Prostate gland (tissue), 2 donors: ENCODE measurements at regions of chr13 and their contacts with region 1.

Region 1: GRCh38 chr13:51286135-51287002 is 53.1 kb upstream of the SERPINE3 start:
- DNase-seq: peak; percentile 84
- H3K4me3 ChIP-seq: no peak overlapping the region
- H3K27ac ChIP-seq: no peak overlapping the region
- H3K4me1 ChIP-seq: no peaks in the 10 kb centered on the region
- H3K27me3 ChIP-seq: no peaks in the 10 kb centered on the region
- CTCF ChIP-seq: peak; percentile 83 to 99 (median 90)
- POLR2A ChIP-seq: no peak

Region 2: GRCh38 chr13:50598338-50598737 is 688.0 kb before region 1 on chr13:
- intact Hi-C with region 1: no loop called
- DNase-seq: no peak
- H3K4me3 ChIP-seq: no peak overlapping the region
- H3K27ac ChIP-seq: no peak overlapping the region
- H3K4me1 ChIP-seq: no peaks in the 10 kb centered on the region
- H3K27me3 ChIP-seq: peaks cover 2% of the 10 kb centered on the region
- CTCF ChIP-seq: no peak
- POLR2A ChIP-seq: no peak

Region 3: GRCh38 chr13:51222037-51222685 is 64.2 kb before region 1 on chr13 and contains the start of gene FAM124A:
- intact Hi-C with region 1: loop called (anchors 1 kb)
- DNase-seq: peak; percentile 37
- H3K4me3 ChIP-seq: peak within 1 kb of the TSS; percentile 81 to 87
- H3K27ac ChIP-seq: peak within 1 kb of the TSS; percentile 50 to 73
- H3K4me1 ChIP-seq: peaks cover 2% of the 10 kb centered on the region
- H3K27me3 ChIP-seq: no peaks in the 10 kb centered on the region
- CTCF ChIP-seq: peak in 2 of 4 experiments; percentile 36 to 61
- POLR2A ChIP-seq: no peak
- total RNA-seq, gene FAM124A: 5.5 to 11.2 TPM

Region 4: DNA sequence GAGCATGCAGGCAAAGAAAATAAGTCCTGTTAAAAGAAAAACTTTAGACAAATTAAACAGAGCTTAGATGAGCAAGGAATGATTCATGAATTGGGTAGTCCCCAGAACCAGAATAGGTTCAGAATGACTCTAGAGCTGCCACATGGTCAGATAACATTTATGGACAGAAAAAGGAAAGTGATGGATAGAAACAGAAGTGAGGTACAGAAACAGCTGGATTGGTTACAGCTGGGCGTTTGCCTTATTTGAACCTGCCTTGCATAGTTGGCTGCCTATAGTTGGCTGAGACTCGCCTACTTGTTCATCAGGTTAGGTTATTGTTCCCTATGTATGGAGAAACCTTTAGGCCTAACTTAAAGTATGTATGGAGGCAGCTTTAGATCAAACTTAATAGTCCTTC is 333.2 kb after region 1 on chr13:
- intact Hi-C with region 1: no loop called
- DNase-seq: no peak
- H3K4me3 ChIP-seq: no peak overlapping the region
- H3K27ac ChIP-seq: no peak overlapping the region
- H3K4me1 ChIP-seq: no peaks in the 10 kb centered on the region
- H3K27me3 ChIP-seq: no peaks in the 10 kb centered on the region
- CTCF ChIP-seq: no peak
- POLR2A ChIP-seq: no peak